ENCODE measurements at regions of chr2 and their contacts with region 1.

Region 1: GRCh38 chr2:174577967-174578589 is 19.5 kb downstream of the WIPF1 start:
- DNase-seq: peak in 1 of 2 donors; percentile 85
- ATAC-seq: peak; percentile 85 to 93 (median 85)
- H3K4me3 ChIP-seq: no peak overlapping the region
- H3K4me3 Mint-ChIP-seq: no peak overlapping the region
- H3K27ac ChIP-seq: no peak overlapping the region
- H3K27ac Mint-ChIP-seq: peak overlapping the region; percentile 80 to 98
- H3K4me1 ChIP-seq: peaks cover 32% of the 10 kb centered on the region
- H3K4me1 Mint-ChIP-seq: peaks cover 67 to 77% of the 10 kb centered on the region in 2 donors
- H3K27me3 ChIP-seq: no peaks in the 10 kb centered on the region
- H3K27me3 Mint-ChIP-seq: no peaks in the 10 kb centered on the region
- CTCF ChIP-seq: peak; percentile 81

Region 2: GRCh38 chr2:174603280-174603679 is 25.2 kb after region 1 on chr2:
- intact Hi-C with region 1: loop called (anchors 1 kb)
- DNase-seq: peak; percentile 39 to 84
- ATAC-seq: peak; percentile 87 to 94 (median 93)
- H3K4me3 ChIP-seq: no peak overlapping the region
- H3K4me3 Mint-ChIP-seq: no peak overlapping the region
- H3K27ac ChIP-seq: peak overlapping the region; percentile 44
- H3K27ac Mint-ChIP-seq: peak overlapping the region; percentile 81 to 83
- H3K4me1 ChIP-seq: peaks cover 45% of the 10 kb centered on the region
- H3K4me1 Mint-ChIP-seq: peaks cover 64 to 69% of the 10 kb centered on the region in 2 donors
- H3K27me3 ChIP-seq: no peaks in the 10 kb centered on the region
- H3K27me3 Mint-ChIP-seq: no peaks in the 10 kb centered on the region
- CTCF ChIP-seq: peak; percentile 60

Region 3: DNA sequence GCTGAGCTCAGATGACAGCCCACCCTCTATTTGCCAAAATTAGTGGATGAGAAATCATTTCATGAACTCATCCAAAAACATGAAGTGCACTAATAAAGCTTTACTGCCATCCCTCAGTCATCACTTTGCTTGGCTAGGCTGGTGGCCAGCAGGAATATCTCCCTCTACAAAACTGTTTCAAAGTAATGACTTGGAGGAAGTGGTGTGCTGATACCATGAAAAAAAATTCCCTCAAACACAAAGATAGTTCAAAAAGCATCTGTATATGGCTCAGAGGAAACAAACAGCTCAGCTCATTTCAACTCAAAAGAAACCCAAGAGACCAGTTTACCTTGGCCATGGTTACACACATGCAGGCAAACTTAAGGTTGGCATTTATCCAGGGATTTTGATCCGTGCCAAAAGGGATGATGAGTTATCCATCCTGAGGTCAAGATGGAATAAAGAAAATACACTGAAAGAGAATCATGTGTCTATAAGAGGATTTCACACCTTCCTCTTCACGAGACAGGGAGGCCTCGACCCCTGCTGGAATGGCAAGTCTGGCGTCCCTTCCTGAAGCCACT is 37.9 kb after region 1 on chr2:
- intact Hi-C with region 1: no loop called
- DNase-seq: peak in 1 of 2 donors; percentile 47
- ATAC-seq: no peak
- H3K4me3 ChIP-seq: no peak overlapping the region
- H3K4me3 Mint-ChIP-seq: no peak overlapping the region
- H3K27ac ChIP-seq: peak overlapping the region; percentile 28
- H3K27ac Mint-ChIP-seq: peak overlapping the region; percentile 64 to 73
- H3K4me1 ChIP-seq: peaks cover 28% of the 10 kb centered on the region
- H3K4me1 Mint-ChIP-seq: peaks cover 70 to 71% of the 10 kb centered on the region in 2 donors
- H3K27me3 ChIP-seq: no peaks in the 10 kb centered on the region
- H3K27me3 Mint-ChIP-seq: no peaks in the 10 kb centered on the region
- CTCF ChIP-seq: no peak

Region 4: DNA sequence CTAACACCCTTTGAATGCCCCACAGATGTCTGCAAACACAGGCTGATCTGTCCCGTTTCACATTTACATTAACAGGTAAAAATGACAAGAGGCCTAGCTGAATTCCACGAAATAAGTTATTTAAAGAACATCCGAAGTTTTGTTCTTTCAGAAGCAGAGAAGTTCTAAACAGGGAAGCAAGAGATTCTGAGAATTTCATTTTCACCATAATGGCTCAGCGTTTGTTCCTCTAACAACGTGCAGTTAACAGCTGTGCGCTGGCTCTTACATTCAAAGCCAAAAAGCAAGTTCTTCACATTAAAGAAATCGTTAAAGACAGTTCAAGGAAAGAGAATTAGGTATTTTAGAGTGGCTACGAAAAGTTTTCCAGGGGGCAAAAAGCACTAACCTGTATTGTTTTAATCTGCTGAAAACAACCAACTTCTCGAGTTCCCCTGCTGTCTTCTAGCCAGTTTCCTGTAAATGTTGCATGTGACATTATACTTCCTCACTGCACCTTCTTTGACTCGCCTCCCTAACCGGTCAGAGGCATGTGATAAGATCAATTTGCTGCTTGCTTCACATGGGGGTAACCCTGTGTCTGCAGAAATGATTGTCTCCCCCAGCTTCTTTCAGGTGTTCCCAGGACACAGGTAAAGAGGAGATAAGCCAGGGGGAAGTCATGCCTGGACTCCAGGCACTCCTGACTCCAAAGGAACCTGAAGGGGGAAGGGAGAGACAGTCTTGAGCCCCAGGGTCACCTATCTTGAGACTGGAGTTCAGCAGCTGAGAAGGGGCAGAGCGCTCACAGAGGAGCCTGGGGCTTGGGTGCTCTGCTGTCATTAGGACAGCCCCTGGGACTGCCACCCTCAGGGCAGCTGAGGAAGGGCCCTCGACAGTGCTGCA is 56.3 kb after region 1 on chr2:
- intact Hi-C with region 1: loop called (anchors 1 kb)
- DNase-seq: peak; percentile 39 to 79
- ATAC-seq: peak; percentile 71 to 85 (median 72)
- H3K4me3 ChIP-seq: peak overlapping the region; percentile 65
- H3K4me3 Mint-ChIP-seq: peak overlapping the region; percentile 98
- H3K27ac ChIP-seq: peak overlapping the region; percentile 83
- H3K27ac Mint-ChIP-seq: peak overlapping the region; percentile 95 to 98
- H3K4me1 ChIP-seq: peaks cover 30% of the 10 kb centered on the region
- H3K4me1 Mint-ChIP-seq: peaks cover 62 to 63% of the 10 kb centered on the region in 2 donors
- H3K27me3 ChIP-seq: no peaks in the 10 kb centered on the region
- H3K27me3 Mint-ChIP-seq: no peaks in the 10 kb centered on the region
- CTCF ChIP-seq: no peak

Region 5: GRCh38 chr2:174682578-174683391 is 104.7 kb after region 1 on chr2:
- intact Hi-C with region 1: loop called (anchors 1 kb)
- DNase-seq: peak; percentile 63 to 78
- ATAC-seq: peak; percentile 78 to 84 (median 80)
- H3K4me3 ChIP-seq: peak overlapping the region; percentile 75
- H3K4me3 Mint-ChIP-seq: peak overlapping the region; percentile 95
- H3K27ac ChIP-seq: peak overlapping the region; percentile 40
- H3K27ac Mint-ChIP-seq: peak overlapping the region; percentile 88
- H3K4me1 ChIP-seq: peaks cover 17% of the 10 kb centered on the region
- H3K4me1 Mint-ChIP-seq: peaks cover 25 to 40% of the 10 kb centered on the region in 2 donors
- H3K27me3 ChIP-seq: no peaks in the 10 kb centered on the region
- H3K27me3 Mint-ChIP-seq: no peaks in the 10 kb centered on the region
- CTCF ChIP-seq: no peak

Region 6: GRCh38 chr2:174688079-174688478 is 110.0 kb after region 1 on chr2:
- intact Hi-C with region 1: loop called (anchors 1 kb)
- DNase-seq: peak in 1 of 2 donors; percentile 71
- ATAC-seq: peak; percentile 62 to 76 (median 67)
- H3K4me3 ChIP-seq: no peak overlapping the region
- H3K4me3 Mint-ChIP-seq: no peak overlapping the region
- H3K27ac ChIP-seq: no peak overlapping the region
- H3K27ac Mint-ChIP-seq: no peak overlapping the region
- H3K4me1 ChIP-seq: peaks cover 5% of the 10 kb centered on the region
- H3K4me1 Mint-ChIP-seq: peaks cover 6 to 16% of the 10 kb centered on the region in 2 donors
- H3K27me3 ChIP-seq: no peaks in the 10 kb centered on the region
- H3K27me3 Mint-ChIP-seq: peaks cover 5 to 19% of the 10 kb centered on the region in 2 donors
- CTCF ChIP-seq: peak; percentile 67

Region 7: DNA sequence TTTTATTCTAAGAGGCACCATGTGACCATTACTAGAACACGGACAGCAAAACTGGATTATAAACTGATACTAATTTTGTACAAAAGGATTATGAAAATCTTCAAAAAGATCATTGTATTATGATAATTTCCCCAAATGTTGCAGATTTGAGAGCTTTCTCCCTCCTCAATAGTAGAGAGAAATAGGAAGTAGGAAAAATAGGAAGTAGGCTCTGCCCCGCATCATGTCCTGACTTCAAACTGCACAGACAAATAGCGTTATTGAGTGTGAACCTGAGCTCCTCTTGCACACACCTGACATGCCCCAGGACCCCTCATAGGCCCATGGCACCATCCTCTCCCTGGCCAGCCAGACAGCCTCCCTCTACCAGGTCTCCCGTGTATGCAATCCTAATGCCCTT is 160.8 kb after region 1 on chr2:
- intact Hi-C with region 1: no loop called
- DNase-seq: no peak
- ATAC-seq: no peak
- H3K4me3 ChIP-seq: no peak overlapping the region
- H3K4me3 Mint-ChIP-seq: no peak overlapping the region
- H3K27ac ChIP-seq: no peak overlapping the region
- H3K27ac Mint-ChIP-seq: no peak overlapping the region
- H3K4me1 ChIP-seq: no peaks in the 10 kb centered on the region
- H3K4me1 Mint-ChIP-seq: no peaks in the 10 kb centered on the region
- H3K27me3 ChIP-seq: peaks cover 3% of the 10 kb centered on the region
- H3K27me3 Mint-ChIP-seq: peaks cover 28 to 29% of the 10 kb centered on the region in 2 donors
- CTCF ChIP-seq: no peak